CD4-positive, alpha-beta T cell (primary cell): ENCODE measurements at regions of chr11 and their contacts with region 1.

Region 1: DNA sequence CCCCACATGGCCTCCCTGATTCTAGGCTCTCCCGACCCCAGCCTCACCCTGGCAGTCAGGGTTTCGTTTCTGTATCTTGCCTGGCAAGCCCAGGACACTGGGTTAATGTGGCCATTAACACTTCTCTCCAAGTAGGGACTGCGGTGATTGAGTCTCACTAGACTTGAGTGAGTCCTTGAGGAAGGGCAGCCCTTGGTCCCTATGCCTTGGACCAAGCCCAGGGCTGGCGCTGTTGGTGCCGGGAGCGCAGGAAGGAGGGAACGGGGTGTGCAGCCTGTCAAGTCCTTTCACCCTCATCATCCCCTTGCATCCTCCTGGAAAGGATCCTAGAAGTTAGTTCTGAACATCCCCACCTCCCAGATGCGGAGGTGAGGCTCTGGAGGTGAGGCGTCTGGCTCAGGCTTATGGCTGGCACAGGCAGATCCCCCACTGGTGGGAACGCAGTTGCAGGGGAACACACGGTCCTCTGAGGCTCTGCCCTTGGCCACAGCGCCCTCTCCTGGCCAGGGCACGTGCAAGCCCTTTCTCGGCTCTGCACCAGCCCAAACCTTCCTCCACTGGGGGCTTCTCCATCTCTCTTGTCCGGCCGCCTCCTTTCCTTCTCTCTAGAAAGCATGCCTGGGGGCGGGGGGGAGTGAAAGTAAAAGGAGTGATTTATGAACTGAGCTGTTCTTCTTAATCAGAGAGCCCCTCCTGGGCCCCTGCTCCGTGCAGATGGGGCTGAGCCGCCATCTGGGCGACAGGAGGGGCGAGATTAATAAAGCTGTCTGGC is 56.7 kb downstream of the TP53I11 start:
- DNase-seq: peak; percentile 13 to 77 (median 50)
- ATAC-seq: peak; percentile 67
- H3K4me3 ChIP-seq: no peak overlapping the region
- H3K4me3 Mint-ChIP-seq: no peak overlapping the region
- H3K27ac ChIP-seq: no peak overlapping the region
- H3K27ac Mint-ChIP-seq: no peak overlapping the region
- H3K4me1 ChIP-seq: peaks cover 5% of the 10 kb centered on the region
- H3K4me1 Mint-ChIP-seq: no peaks in the 10 kb centered on the region
- H3K27me3 ChIP-seq: no peaks in the 10 kb centered on the region
- H3K27me3 Mint-ChIP-seq: no peaks in the 10 kb centered on the region
- CTCF ChIP-seq: peak; percentile 44

Region 2: GRCh38 chr11:44621140-44621681 is 272.8 kb before region 1 on chr11:
- CTCF ChIA-PET with region 1: no interaction called
- POLR2A ChIA-PET with region 1: no interaction called
- intact Hi-C with region 1: loop called in 1 of 2 experiments (anchors 5 kb)
- DNase-seq: peak; percentile 30 to 80 (median 60)
- ATAC-seq: peak; percentile 69
- H3K4me3 ChIP-seq: no peak overlapping the region
- H3K4me3 Mint-ChIP-seq: no peak overlapping the region
- H3K27ac ChIP-seq: no peak overlapping the region
- H3K27ac Mint-ChIP-seq: no peak overlapping the region
- H3K4me1 ChIP-seq: peaks cover 38% of the 10 kb centered on the region
- H3K4me1 Mint-ChIP-seq: peaks cover 36% of the 10 kb centered on the region
- H3K27me3 ChIP-seq: no peaks in the 10 kb centered on the region
- H3K27me3 Mint-ChIP-seq: no peaks in the 10 kb centered on the region
- CTCF ChIP-seq: peak; percentile 65

Region 3: DNA sequence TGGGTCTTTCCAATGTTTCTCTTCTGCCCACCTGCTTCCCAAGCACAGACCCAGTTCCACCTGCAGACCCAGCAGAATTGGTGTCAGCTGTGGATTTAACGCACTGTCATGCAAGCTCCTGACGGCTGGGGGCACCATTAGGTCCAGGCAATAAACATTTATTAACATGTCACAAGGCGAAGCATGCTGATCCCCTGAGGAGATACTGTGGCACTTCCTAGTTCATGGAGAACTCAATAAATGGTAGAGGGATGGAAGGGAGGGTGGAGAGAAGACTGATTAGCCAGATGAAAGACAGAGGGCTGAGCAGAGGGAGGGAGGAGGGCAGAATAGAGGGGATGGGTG is 235.6 kb before region 1 on chr11:
- CTCF ChIA-PET with region 1: no interaction called
- POLR2A ChIA-PET with region 1: no interaction called
- intact Hi-C with region 1: loop called in 1 of 2 experiments (anchors 5 kb)
- DNase-seq: peak in 7 of 14 experiments; percentile 9 to 63 (median 52)
- ATAC-seq: no peak
- H3K4me3 ChIP-seq: no peak overlapping the region
- H3K4me3 Mint-ChIP-seq: no peak overlapping the region
- H3K27ac ChIP-seq: no peak overlapping the region
- H3K27ac Mint-ChIP-seq: no peak overlapping the region
- H3K4me1 ChIP-seq: peaks cover 16% of the 10 kb centered on the region
- H3K4me1 Mint-ChIP-seq: peaks cover 20% of the 10 kb centered on the region
- H3K27me3 ChIP-seq: no peaks in the 10 kb centered on the region
- H3K27me3 Mint-ChIP-seq: peaks cover 13% of the 10 kb centered on the region
- CTCF ChIP-seq: no peak

Region 4: DNA sequence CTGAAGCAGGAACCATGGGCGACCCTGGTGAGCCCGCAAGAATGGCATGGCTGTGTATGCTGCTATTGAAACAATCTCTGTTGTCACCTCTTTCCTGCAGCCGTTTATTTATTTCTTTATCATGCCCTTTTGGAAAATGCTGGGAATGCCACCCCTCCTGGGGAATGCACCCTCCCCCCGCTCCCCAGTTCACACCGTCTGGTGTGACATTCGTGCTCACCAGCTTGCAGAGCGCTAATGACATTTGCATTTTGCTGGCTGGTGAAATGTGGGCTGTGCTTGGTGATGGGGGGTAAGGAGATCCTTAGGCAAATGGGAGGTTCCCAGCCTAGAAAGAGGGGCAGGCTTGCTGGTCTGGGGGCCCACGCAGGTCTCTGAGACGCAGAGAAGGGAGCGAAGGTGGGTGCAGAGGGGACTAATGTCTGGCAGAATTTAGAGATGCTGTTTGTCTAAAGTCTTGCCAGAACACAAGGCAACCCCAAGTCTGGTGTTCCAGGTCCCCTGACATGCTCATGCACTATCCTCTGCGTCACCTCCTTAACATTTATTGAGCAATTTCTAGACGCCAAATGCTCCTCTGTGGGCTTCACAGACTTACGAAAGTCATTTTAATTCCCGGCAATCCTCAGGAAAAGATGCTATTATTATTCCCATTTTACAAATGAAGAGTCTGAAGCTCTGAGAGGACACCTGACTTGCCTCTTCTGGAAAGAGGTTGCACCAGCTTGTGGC is 35.1 kb before region 1 on chr11:
- CTCF ChIA-PET with region 1: interaction called, 3 read pairs
- POLR2A ChIA-PET with region 1: no interaction called
- intact Hi-C with region 1: loop called in 1 of 2 experiments (anchors 5 kb)
- DNase-seq: no peak
- ATAC-seq: no peak
- H3K4me3 ChIP-seq: no peak overlapping the region
- H3K4me3 Mint-ChIP-seq: no peak overlapping the region
- H3K27ac ChIP-seq: no peak overlapping the region
- H3K27ac Mint-ChIP-seq: no peak overlapping the region
- H3K4me1 ChIP-seq: peaks cover 34% of the 10 kb centered on the region
- H3K4me1 Mint-ChIP-seq: peaks cover 29% of the 10 kb centered on the region
- H3K27me3 ChIP-seq: no peaks in the 10 kb centered on the region
- H3K27me3 Mint-ChIP-seq: no peaks in the 10 kb centered on the region
- CTCF ChIP-seq: no peak

Region 5: DNA sequence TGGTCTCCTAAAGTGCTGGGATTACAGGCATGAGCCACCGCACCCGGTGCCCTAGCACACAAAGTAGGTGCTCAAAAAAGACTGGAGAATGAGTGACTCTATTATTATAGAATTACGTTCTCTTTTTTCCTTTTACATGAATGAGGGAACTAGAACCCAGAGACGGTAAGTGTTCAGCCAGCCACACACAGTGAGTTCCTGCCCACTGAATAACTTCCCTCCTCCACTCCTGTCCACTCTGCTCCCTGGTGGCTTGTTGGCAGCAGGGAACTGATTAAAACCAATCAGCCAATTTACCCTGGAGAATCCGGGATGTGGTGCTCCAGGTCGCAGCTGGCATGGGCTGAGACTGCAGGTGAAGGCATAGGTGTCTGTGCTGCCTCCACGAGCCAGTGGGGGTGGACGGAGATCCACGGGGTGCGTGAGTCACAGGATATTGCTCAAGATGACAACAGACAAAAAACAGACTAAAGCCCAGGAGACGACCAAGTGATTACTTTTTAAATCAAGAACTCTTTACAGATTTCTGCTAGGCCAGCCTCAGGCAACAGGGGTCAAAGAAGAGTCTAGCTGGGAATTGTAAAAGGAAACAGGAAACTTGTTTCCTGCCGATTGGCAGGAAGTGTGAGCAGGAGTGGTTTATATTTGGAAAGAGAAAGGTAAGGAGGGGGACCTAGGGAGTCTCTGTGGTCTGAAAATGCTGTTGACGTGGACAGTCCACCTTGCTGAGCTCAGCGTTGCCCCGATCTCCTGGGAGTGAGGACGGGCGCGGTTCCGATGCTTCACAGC is 151.8 kb after region 1 on chr11:
- CTCF ChIA-PET with region 1: no interaction called
- POLR2A ChIA-PET with region 1: no interaction called
- intact Hi-C with region 1: no loop called
- DNase-seq: peak in 6 of 14 experiments; percentile 2 to 62 (median 12)
- ATAC-seq: no peak
- H3K4me3 ChIP-seq: no peak overlapping the region
- H3K4me3 Mint-ChIP-seq: no peak overlapping the region
- H3K27ac ChIP-seq: no peak overlapping the region
- H3K27ac Mint-ChIP-seq: no peak overlapping the region
- H3K4me1 ChIP-seq: peaks cover 9% of the 10 kb centered on the region
- H3K4me1 Mint-ChIP-seq: no peaks in the 10 kb centered on the region
- H3K27me3 ChIP-seq: no peaks in the 10 kb centered on the region
- H3K27me3 Mint-ChIP-seq: no peaks in the 10 kb centered on the region
- CTCF ChIP-seq: no peak

Region 6: GRCh38 chr11:45233121-45233803 is 339.2 kb after region 1 on chr11:
- CTCF ChIA-PET with region 1: no interaction called
- POLR2A ChIA-PET with region 1: no interaction called
- intact Hi-C with region 1: no loop called
- DNase-seq: peak; percentile 25 to 66 (median 44)
- ATAC-seq: peak; percentile 61
- H3K4me3 ChIP-seq: no peak overlapping the region
- H3K4me3 Mint-ChIP-seq: no peak overlapping the region
- H3K27ac ChIP-seq: no peak overlapping the region
- H3K27ac Mint-ChIP-seq: no peak overlapping the region
- H3K4me1 ChIP-seq: peaks cover 4% of the 10 kb centered on the region
- H3K4me1 Mint-ChIP-seq: no peaks in the 10 kb centered on the region
- H3K27me3 ChIP-seq: peaks cover 0 to 3% of the 10 kb centered on the region in 2 experiments
- H3K27me3 Mint-ChIP-seq: peaks cover 16% of the 10 kb centered on the region
- CTCF ChIP-seq: peak; percentile 66